ENCODE measurements at regions of chr11 and their contacts with region 1.

Region 1: DNA sequence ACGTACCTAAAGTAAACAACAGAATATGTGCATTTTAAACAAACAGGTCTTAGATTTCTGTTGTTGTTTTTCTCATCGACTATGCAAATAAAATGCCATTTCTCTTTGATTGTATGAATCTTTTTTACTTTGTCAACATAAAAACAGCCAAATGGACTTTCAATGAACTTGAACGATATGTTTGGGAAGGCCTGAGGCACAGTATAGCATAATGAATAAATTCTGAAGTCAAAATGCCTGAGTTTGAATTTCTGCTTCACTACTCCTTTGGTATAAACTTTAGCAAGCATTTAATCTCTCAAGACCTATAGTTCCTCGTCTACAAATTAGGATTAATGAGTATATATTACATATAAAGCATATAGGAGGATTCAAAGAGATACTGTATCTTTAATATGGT is 1369.9 kb upstream of the TENM4 start:
- DNase-seq: no peak
- H3K4me3 ChIP-seq: no peak overlapping the region
- H3K27ac ChIP-seq: no peak overlapping the region
- H3K4me1 ChIP-seq: no peaks in the 10 kb centered on the region
- H3K27me3 ChIP-seq: no peaks in the 10 kb centered on the region
- CTCF ChIP-seq: no peak
- EP300 ChIP-seq: no peak
- POLR2A ChIP-seq: no peak

Region 2: GRCh38 chr11:80424012-80424695 is 386.5 kb before region 1 on chr11:
- in situ Hi-C with region 1: no loop called
- intact Hi-C with region 1: no loop called
- DNase-seq: no peak
- H3K4me3 ChIP-seq: no peak overlapping the region
- H3K27ac ChIP-seq: no peak overlapping the region
- H3K4me1 ChIP-seq: no peaks in the 10 kb centered on the region
- H3K27me3 ChIP-seq: no peaks in the 10 kb centered on the region
- CTCF ChIP-seq: no peak
- EP300 ChIP-seq: no peak
- POLR2A ChIP-seq: no peak

Region 3: DNA sequence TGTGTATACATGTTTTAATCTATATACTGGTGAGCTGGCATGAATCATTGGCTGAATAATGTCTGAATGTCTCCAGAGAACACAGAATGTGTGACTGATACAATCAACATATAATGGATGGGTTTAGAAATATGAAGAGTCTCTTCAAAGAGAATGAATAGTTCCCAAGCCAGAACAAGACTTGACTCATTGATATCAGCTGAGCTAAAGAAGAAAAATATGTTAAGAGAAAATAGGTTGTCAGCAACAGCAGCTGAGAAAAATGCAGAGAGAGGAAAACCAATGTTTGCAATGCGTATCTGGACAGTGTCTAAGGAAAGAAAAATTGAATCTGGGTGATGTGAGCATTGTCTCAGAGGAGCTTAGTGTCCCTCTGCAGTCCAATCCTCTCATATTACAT is 88.1 kb before region 1 on chr11:
- in situ Hi-C with region 1: no loop called
- intact Hi-C with region 1: no loop called
- DNase-seq: no peak
- H3K4me3 ChIP-seq: no peak overlapping the region
- H3K27ac ChIP-seq: no peak overlapping the region
- H3K4me1 ChIP-seq: no peaks in the 10 kb centered on the region
- H3K27me3 ChIP-seq: no peaks in the 10 kb centered on the region
- CTCF ChIP-seq: no peak
- EP300 ChIP-seq: no peak
- POLR2A ChIP-seq: no peak

Region 4: DNA sequence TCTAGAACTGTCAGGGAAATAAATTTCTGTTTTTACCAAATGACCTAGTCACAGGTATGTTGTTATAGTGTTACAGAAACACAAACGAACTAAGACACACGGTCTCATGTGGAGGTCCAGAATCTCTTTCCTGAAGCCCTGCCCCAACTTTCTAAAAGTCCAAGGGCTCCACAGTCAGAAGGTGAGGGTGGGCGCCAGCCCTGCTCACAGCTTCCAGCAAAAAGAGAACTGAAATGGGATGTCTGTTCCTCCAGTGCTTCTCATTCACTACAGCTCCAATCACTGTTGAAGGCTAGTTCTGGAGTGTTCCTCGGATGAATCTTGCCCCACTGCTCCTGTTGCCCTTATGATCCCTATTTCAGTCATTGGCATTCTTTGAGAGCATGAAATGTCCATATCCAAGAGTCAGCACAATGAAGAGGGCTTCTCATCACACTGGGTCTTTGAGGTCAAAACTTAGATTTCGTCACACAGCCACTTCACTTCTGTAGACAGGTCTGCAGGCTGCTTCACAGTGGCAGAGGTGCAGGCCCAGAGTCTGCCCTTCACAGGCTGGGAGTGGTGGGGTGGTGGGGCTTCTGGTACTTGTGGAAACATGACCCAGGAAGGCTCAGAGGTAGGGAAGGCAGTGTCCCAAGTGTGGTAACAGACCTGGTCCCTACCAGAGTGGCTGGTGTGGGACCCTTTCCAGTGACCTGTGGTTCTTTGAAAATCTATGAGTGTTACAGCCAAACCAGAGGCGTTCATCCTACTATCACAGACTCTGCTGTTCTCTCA is 1888.1 kb after region 1 on chr11:
- in situ Hi-C with region 1: no loop called
- intact Hi-C with region 1: loop called (anchors 5 kb)
- DNase-seq: no peak
- H3K4me3 ChIP-seq: no peak overlapping the region
- H3K27ac ChIP-seq: no peak overlapping the region
- H3K4me1 ChIP-seq: no peaks in the 10 kb centered on the region
- H3K27me3 ChIP-seq: no peaks in the 10 kb centered on the region
- CTCF ChIP-seq: no peak
- EP300 ChIP-seq: no peak
- POLR2A ChIP-seq: no peak

Measured in transverse colon (tissue), 4 donors.